Activated CD4-positive, alpha-beta T cell treated with anti-CD3 and anti-CD28 coated beads, Interleukin-2, amount 10 ng/mL, durations not matched to agents 24 days and 14 days (primary cell): ENCODE measurements at regions of chr6 and their contacts with region 1.

Region 1: DNA sequence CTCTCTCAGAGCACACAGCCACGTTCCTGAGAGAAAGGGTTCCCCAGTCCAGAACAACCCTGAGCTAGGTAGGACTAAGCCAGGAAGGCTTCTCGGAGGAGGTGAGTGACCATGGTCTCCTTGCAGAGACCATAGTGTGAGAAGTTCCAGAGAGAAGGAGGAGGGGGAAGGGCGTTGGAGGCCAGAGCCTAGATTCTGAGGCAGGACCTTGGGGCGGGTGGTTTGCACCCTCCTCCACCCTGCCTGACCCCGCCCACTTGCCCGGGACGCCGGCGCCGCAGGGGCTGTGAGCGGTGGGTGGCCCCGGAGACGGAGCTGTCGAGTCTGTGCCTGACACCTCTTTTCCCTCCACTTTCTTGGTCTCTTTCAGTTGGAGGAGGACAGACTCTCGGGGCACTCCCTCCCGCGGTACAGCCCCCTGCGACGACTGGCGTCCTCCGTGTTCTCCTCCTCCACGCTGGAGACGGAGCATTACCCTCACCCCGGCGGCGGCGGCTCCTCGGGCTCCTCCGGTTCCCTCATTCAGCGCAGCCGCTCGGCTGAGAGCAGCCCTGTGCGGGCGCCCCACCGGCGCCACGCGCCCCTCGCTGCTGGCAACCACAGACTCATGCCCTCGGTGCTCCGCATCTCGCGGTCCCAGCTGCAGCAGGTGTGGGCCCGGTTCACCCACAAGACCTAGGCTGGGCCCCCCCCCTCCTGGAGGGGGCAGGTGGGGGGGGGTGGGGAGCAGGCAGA is 26.2 kb downstream of the TTBK1 start:
- DNase-seq: peak; percentile 84
- H3K4me3 Mint-ChIP-seq: peak overlapping the region; percentile 70
- H3K27ac Mint-ChIP-seq: no peak overlapping the region
- H3K4me1 Mint-ChIP-seq: peaks cover 8% of the 10 kb centered on the region
- H3K27me3 Mint-ChIP-seq: peaks cover 45% of the 10 kb centered on the region

Region 2: DNA sequence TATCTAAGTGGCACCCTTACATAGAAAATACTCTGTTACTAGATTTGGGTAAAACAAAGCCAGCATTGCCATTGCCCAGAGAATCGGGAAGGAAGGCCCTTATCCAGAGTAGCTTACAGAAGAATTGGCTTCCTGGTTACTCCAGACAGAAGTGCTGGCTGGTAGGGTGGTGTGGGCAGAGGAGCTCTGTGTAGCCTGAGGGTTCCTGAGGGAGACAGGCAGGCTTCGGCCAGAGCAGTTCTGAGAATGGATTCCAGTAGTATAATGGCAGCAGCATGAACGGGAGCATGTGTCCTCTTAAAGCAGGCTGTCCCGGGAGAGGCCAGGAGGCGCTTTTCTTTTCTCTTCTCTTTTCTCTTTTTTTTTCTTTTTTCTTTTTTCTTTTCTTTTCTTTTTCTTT is 75.5 kb before region 1 on chr6:
- intact Hi-C with region 1: no loop called
- DNase-seq: no peak
- H3K4me3 Mint-ChIP-seq: no peak overlapping the region
- H3K27ac Mint-ChIP-seq: peak overlapping the region; percentile 13
- H3K4me1 Mint-ChIP-seq: peaks cover 5% of the 10 kb centered on the region
- H3K27me3 Mint-ChIP-seq: no peaks in the 10 kb centered on the region

Region 3: GRCh38 chr6:43254138-43254817 is 15.2 kb before region 1 on chr6:
- intact Hi-C with region 1: no loop called
- DNase-seq: no peak
- H3K4me3 Mint-ChIP-seq: no peak overlapping the region
- H3K27ac Mint-ChIP-seq: peak overlapping the region; percentile 31
- H3K4me1 Mint-ChIP-seq: peaks cover 44% of the 10 kb centered on the region
- H3K27me3 Mint-ChIP-seq: peaks cover 20% of the 10 kb centered on the region

Region 4: GRCh38 chr6:43334466-43335095 is 65.1 kb after region 1 on chr6:
- intact Hi-C with region 1: loop called (anchors 5 kb)
- DNase-seq: no peak
- H3K4me3 Mint-ChIP-seq: no peak overlapping the region
- H3K27ac Mint-ChIP-seq: no peak overlapping the region
- H3K4me1 Mint-ChIP-seq: peaks cover 20% of the 10 kb centered on the region
- H3K27me3 Mint-ChIP-seq: peaks cover 3% of the 10 kb centered on the region

Region 5: DNA sequence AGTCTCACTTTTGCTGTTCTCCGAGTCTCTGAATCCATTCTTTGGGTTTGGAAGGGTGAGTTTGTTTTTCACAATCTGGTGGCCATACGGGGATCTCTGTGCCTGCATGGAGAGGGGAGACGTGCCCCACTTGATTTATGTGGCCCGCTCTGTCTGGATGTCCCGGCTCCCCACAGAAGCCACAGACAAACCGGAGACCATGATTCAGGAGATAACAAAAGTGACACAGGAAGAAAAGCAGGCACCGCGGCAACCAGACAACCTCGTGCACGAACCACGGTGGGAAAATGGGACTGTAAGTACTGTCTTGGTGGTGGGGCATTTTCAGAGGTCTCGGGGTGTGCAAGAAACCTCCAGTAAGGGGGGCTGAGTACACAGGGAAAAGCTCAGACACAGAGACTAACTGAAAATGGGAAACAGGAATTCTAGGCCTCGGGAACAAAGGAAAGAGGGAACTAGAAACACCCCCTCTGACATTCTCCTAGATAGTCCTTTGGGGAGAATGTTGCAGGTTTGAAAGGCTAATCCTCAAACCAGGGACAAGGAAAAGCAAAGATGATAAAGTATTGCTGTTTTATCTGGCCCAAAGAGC is 122.1 kb after region 1 on chr6:
- intact Hi-C with region 1: no loop called
- DNase-seq: peak; percentile 79
- H3K4me3 Mint-ChIP-seq: peak overlapping the region; percentile 50
- H3K27ac Mint-ChIP-seq: no peak overlapping the region
- H3K4me1 Mint-ChIP-seq: peaks cover 20% of the 10 kb centered on the region
- H3K27me3 Mint-ChIP-seq: peaks cover 70% of the 10 kb centered on the region